Tibial artery (tissue), 4 donors: ENCODE measurements at regions of chr7 and their contacts with region 1.

Region 1: GRCh38 chr7:2567679-2568278 is 9.0 kb downstream of the IQCE start:
- DNase-seq: peak in 1 of 2 donors; percentile 38
- H3K4me3 ChIP-seq: no peak overlapping the region
- H3K27ac ChIP-seq: no peak overlapping the region
- H3K4me1 ChIP-seq: peaks cover 0 to 4% (median 0%) of the 10 kb centered on the region in 4 donors
- H3K27me3 ChIP-seq: no peaks in the 10 kb centered on the region
- CTCF ChIP-seq: peak; percentile 48 to 55

Region 2: GRCh38 chr7:2523941-2524807 is 43.6 kb before region 1 on chr7:
- intact Hi-C with region 1: loop called (anchors 5 kb)
- DNase-seq: peak in 1 of 2 donors; percentile 57
- H3K4me3 ChIP-seq: no peak overlapping the region
- H3K27ac ChIP-seq: no peak overlapping the region
- H3K4me1 ChIP-seq: peaks cover 0 to 69% (median 33%) of the 10 kb centered on the region in 4 donors
- H3K27me3 ChIP-seq: peaks cover 0 to 81% of the 10 kb centered on the region in 2 donors
- CTCF ChIP-seq: no peak

Region 3: GRCh38 chr7:2680792-2681490 is 113.2 kb after region 1 on chr7:
- intact Hi-C with region 1: loop called (anchors 10 kb)
- DNase-seq: peak; percentile 82 to 87
- H3K4me3 ChIP-seq: no peak overlapping the region
- H3K27ac ChIP-seq: no peak overlapping the region
- H3K4me1 ChIP-seq: peaks cover 0 to 12% (median 4%) of the 10 kb centered on the region in 4 donors
- H3K27me3 ChIP-seq: peaks cover 0 to 36% of the 10 kb centered on the region in 2 donors
- CTCF ChIP-seq: peak; percentile 73 to 80

Region 4: GRCh38 chr7:3232228-3232627 is 664.4 kb after region 1 on chr7:
- intact Hi-C with region 1: no loop called
- DNase-seq: peak; percentile 55 to 87
- H3K4me3 ChIP-seq: no peak overlapping the region
- H3K27ac ChIP-seq: peak overlapping the region; percentile 65 to 66
- H3K4me1 ChIP-seq: peaks cover 0 to 41% (median 21%) of the 10 kb centered on the region in 4 donors
- H3K27me3 ChIP-seq: no peaks in the 10 kb centered on the region
- CTCF ChIP-seq: no peak